ENCODE measurements at regions of chr10 and their contacts with region 1.

Region 1: DNA sequence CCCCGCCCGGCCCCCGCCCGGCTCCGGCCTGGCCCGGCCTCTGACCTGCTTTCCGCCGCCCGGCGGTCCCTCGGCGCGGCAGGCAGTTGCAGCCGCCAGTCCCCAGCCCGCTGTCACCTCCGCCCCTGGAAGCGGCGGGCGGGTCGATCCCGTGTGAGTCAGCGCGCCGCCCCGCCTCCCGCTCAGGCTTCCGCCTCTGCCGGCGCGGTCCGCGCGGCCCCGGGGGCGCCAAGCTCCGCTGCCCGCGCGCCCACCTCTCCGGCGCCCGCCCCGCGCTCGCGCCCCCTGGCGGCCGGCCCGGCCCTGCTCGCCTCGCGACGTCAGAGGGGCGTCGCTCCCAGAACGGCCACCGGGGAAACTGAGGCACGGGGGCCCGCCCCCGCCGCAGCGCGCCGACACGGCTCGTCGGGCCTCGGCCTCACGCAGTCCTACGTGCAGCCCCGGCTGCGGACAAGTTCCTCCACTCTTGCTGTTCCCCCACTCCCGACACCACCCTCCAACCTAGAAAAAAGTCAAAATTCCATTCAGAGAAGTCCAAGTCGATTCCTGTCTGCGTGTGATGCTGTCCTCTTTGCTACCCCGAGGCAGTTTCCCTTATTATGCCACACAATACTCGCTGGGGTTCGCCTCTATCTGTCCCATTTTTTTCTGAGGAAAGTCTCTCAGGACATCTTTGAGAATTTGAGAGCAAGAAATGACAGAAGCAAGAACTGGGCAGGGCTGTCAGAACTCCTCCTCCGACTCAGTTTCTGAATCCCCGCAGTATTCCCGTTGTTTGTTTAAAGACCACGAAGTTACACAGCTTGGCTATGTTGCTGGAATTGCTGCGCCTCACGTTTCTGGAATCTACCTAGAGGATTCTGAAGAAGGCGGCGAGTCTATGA is at the start of gene DNMBP:
- DNase-seq: peak; percentile 85
- ATAC-seq: peak; percentile 98
- H3K4me3 Mint-ChIP-seq: peak within 1 kb of the TSS; percentile 86
- H3K27ac Mint-ChIP-seq: peak within 1 kb of the TSS; percentile 77
- H3K4me1 Mint-ChIP-seq: peaks cover 37% of the 10 kb centered on the region
- H3K27me3 Mint-ChIP-seq: peaks cover 36% of the 10 kb centered on the region
- total RNA-seq, gene DNMBP: 4.1 to 4.4 TPM

Region 2: DNA sequence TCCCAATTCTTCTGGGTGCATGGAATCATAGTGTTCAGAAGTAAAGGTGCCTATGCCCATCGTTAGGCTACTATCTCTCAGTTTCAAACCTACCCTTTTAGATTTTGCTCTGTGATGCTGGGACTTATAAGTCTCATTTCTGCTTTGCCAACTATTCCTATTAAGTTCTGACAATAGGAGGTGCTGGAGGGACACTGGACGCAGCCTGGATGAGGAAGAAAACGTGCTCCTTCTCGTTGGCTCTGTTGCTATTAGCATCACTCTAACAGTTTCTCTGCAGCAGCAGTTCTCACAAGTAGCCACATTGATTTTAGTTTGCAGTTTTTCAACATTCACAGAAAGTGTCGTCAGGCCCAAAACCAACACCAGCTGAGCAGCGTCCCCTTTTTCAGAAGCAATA is 155.2 kb before region 1 on chr10:
- CTCF ChIA-PET with region 1: interaction called, 10 read pairs
- POLR2A ChIA-PET with region 1: no interaction called
- DNase-seq: no peak
- ATAC-seq: no peak
- H3K4me3 Mint-ChIP-seq: no peak overlapping the region
- H3K27ac Mint-ChIP-seq: no peak overlapping the region
- H3K4me1 Mint-ChIP-seq: no peaks in the 10 kb centered on the region
- H3K27me3 Mint-ChIP-seq: peaks cover 7% of the 10 kb centered on the region

Region 3: GRCh38 chr10:99993701-99994689 is 16.0 kb before region 1 on chr10:
- CTCF ChIA-PET with region 1: interaction called, 61 read pairs
- POLR2A ChIA-PET with region 1: interaction called, 6 read pairs
- DNase-seq: peak; percentile 79
- ATAC-seq: peak; percentile 90
- H3K4me3 Mint-ChIP-seq: peak overlapping the region; percentile 52
- H3K27ac Mint-ChIP-seq: peak overlapping the region; percentile 70
- H3K4me1 Mint-ChIP-seq: peaks cover 20% of the 10 kb centered on the region
- H3K27me3 Mint-ChIP-seq: no peaks in the 10 kb centered on the region

Region 4: DNA sequence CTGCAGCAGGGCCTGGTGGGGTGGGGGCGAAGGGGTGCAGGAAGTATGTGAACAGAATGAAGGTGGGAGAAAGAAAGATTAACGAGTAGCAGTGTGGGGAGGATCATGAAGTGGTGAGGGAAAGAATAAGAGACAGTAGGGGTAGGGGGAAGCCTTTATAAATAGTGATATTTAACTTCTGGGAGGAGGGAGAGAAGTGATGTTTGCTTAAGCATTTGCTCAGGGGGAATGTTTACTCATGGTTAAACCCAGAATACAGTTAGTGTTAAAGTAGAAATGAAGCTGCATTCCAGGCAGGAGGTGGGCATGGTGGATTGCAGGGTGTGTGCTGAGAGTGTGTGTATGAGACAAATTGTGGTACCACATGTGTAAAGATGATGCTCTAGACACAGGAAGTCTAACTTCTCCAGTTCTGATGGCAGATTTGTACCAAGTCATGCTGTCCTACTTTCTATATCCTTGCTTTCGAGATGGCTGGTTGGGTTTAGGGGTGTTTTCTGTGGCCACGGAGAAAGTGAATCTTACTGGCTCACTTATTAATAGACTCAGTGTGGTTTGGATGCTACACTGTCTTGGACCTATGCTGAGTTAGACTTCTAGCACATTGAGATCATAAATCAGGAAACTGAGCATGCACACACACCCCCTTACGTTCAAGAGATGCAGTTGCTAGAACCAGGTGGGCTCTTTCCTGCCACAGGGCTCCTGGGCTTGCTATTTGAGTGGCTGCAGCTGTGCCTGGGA is 10.3 kb after region 1 on chr10:
- CTCF ChIA-PET with region 1: interaction called, 35 read pairs
- POLR2A ChIA-PET with region 1: no interaction called
- DNase-seq: peak; percentile 29
- ATAC-seq: peak; percentile 68
- H3K4me3 Mint-ChIP-seq: no peak overlapping the region
- H3K27ac Mint-ChIP-seq: no peak overlapping the region
- H3K4me1 Mint-ChIP-seq: peaks cover 15% of the 10 kb centered on the region
- H3K27me3 Mint-ChIP-seq: peaks cover 10% of the 10 kb centered on the region